ENCODE measurements at regions of chr4 and their contacts with region 1.

Region 1: GRCh38 chr4:142984871-142985585 is 138.9 kb upstream of the INPP4B start:
- DNase-seq: peak; percentile 23
- ATAC-seq: peak; percentile 75
- H3K4me3 ChIP-seq: no peak overlapping the region
- H3K27ac ChIP-seq: no peak overlapping the region
- H3K4me1 ChIP-seq: no peaks in the 10 kb centered on the region
- H3K27me3 ChIP-seq: no peaks in the 10 kb centered on the region
- CTCF ChIP-seq: peak; percentile 46
- EP300 ChIP-seq: no peak
- POLR2A ChIP-seq: no peak
- RAD21 ChIP-seq: no peak

Region 2: DNA sequence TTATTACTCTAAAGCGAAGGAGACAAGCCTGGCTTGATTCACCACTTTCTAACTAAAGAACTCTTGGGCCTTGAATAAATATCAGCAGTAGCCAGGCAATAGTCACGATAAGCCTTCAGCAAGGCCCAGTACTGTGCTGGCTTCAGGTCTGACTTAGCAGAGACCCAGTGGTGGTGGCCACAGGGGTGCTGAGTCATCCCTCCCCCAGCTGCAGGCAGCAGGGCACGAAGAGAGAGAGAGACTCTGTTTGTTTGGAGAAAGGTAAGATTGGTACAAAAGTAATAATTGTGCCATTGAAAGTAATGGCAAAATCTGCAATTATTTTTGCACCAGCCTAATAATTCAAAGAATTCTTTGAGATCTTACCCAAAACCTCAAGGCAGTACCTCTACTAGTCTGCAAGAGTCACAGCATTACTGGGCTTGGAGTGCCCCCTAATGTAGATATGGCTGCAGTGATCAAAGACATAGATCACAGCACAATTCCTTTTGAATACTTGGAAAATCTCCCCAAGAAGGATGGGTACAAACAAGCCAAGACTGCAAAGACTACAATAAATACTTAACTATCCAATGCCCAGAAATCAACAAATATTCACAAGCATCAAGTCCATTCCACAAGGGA is 40.2 kb after region 1 on chr4:
- CTCF ChIA-PET with region 1: no interaction called
- POLR2A ChIA-PET with region 1: no interaction called
- in situ Hi-C with region 1: no loop called
- intact Hi-C with region 1: loop called (anchors 1 kb)
- DNase-seq: peak; percentile 9
- ATAC-seq: peak; percentile 83
- H3K4me3 ChIP-seq: no peak overlapping the region
- H3K27ac ChIP-seq: no peak overlapping the region
- H3K4me1 ChIP-seq: no peaks in the 10 kb centered on the region
- H3K27me3 ChIP-seq: no peaks in the 10 kb centered on the region
- CTCF ChIP-seq: peak; percentile 35; the same call in 1 of the 2 replicates
- EP300 ChIP-seq: no peak
- POLR2A ChIP-seq: no peak
- RAD21 ChIP-seq: no peak

Region 3: GRCh38 chr4:143085224-143085623 is 100.2 kb after region 1 on chr4:
- CTCF ChIA-PET with region 1: no interaction called
- POLR2A ChIA-PET with region 1: no interaction called
- in situ Hi-C with region 1: no loop called
- intact Hi-C with region 1: loop called (anchors 1 kb)
- DNase-seq: no peak
- ATAC-seq: no peak
- H3K4me3 ChIP-seq: no peak overlapping the region
- H3K27ac ChIP-seq: no peak overlapping the region
- H3K4me1 ChIP-seq: no peaks in the 10 kb centered on the region
- H3K27me3 ChIP-seq: no peaks in the 10 kb centered on the region
- CTCF ChIP-seq: 0 out of 2 replicates have a peak, but pooled peaks have one; percentile 9
- EP300 ChIP-seq: no peak
- POLR2A ChIP-seq: no peak
- RAD21 ChIP-seq: no peak

Region 4: GRCh38 chr4:143178923-143179322 is 193.9 kb after region 1 on chr4:
- CTCF ChIA-PET with region 1: no interaction called
- POLR2A ChIA-PET with region 1: no interaction called
- in situ Hi-C with region 1: loop called (anchors 25 kb)
- intact Hi-C with region 1: loop called (anchors 1 kb)
- DNase-seq: no peak
- ATAC-seq: peak; percentile 25; the same call in 1 of the 3 replicates
- H3K4me3 ChIP-seq: no peak overlapping the region
- H3K27ac ChIP-seq: no peak overlapping the region
- H3K4me1 ChIP-seq: peaks cover 6% of the 10 kb centered on the region
- H3K27me3 ChIP-seq: no peaks in the 10 kb centered on the region; a peak in 1 of 5 replicates
- CTCF ChIP-seq: peak; percentile 36
- EP300 ChIP-seq: no peak
- POLR2A ChIP-seq: no peak
- RAD21 ChIP-seq: no peak

Region 5: GRCh38 chr4:143184217-143185116 is 199.4 kb after region 1 on chr4 and contains the start of gene USP38:
- CTCF ChIA-PET with region 1: no interaction called
- POLR2A ChIA-PET with region 1: no interaction called
- in situ Hi-C with region 1: loop called (anchors 25 kb)
- intact Hi-C with region 1: loop called (anchors 1 kb)
- DNase-seq: peak; percentile 91
- ATAC-seq: peak; percentile 94
- H3K4me3 ChIP-seq: peak within 1 kb of the TSS; percentile 83 to 100 (median 96)
- H3K27ac ChIP-seq: peak within 1 kb of the TSS; percentile 88
- H3K4me1 ChIP-seq: peaks cover 31% of the 10 kb centered on the region
- H3K27me3 ChIP-seq: no peaks in the 10 kb centered on the region; a peak in 1 of 5 replicates
- CTCF ChIP-seq: no peak; the same call in 1 of the 2 replicates
- EP300 ChIP-seq: no peak; a peak in 1 of 4 replicates
- POLR2A ChIP-seq: peak; percentile 82 to 93
- RAD21 ChIP-seq: no peak
- total RNA-seq, gene USP38: 11.8 and 15.5 TPM in 2 replicates

Region 6: GRCh38 chr4:143482840-143483239 is 497.8 kb after region 1 on chr4:
- CTCF ChIA-PET with region 1: interaction called, 4 read pairs
- POLR2A ChIA-PET with region 1: no interaction called
- in situ Hi-C with region 1: loop called (anchors 25 kb)
- intact Hi-C with region 1: no loop called
- DNase-seq: peak; percentile 16
- ATAC-seq: no peak
- H3K4me3 ChIP-seq: no peak overlapping the region
- H3K27ac ChIP-seq: no peak overlapping the region
- H3K4me1 ChIP-seq: no peaks in the 10 kb centered on the region
- H3K27me3 ChIP-seq: no peaks in the 10 kb centered on the region
- CTCF ChIP-seq: peak; percentile 63
- EP300 ChIP-seq: no peak
- POLR2A ChIP-seq: no peak
- RAD21 ChIP-seq: peak; percentile 42; the same call in 1 of the 2 replicates

Measured in HepG2 (cell line).